ENCODE measurements at regions of chr11 and their contacts with region 1.

Region 1: DNA sequence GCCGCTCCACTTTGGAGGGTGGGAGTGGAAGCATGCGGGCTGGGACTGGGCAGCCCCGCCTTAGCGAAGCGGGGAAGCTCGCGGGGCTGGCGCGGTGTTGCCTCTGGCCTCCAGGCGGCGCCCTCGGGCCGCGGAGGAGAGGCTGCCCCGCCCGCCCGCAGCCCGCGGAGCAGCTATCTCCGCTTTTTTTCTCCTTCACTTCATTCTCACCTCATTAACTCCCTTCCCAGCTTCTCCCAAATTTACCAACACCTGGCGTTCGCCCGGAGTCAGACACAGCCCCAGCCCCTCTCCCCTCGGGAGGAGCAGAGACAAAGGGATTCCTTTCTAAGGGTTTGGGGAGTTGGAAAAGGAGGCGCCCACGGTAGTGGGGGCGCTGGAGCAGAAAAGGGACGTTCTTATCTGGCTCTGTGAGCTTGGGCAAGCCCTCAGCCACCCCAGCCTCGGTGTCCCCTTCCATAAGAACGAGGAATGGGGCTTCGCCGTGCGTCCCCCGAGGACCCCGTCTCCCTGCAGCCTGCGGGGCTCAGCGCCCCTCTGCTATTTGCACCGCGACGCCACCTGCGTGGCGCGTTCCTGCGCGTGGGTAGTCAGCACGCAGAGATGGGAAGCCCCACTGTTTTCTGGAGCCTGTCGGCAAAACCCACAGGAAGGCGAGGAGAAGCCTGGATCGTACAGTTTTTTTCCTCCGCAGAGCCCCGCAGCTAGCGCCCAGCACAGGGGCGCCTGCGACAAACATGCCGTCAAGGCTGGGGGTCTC is 1.5 kb upstream of the WNT11 start:
- DNase-seq: peak; percentile 71 to 88
- ATAC-seq: peak; percentile 70 to 89 (median 80)
- H3K4me3 ChIP-seq: peak overlapping the region; percentile 45 to 83 (median 70)
- H3K27ac ChIP-seq: peak overlapping the region in 8 of 10 donors; percentile 28 to 79 (median 63)
- H3K4me1 ChIP-seq: peaks cover 2 to 52% (median 40%) of the 10 kb centered on the region in 9 donors
- H3K27me3 ChIP-seq: peaks cover 0 to 90% (median 3%) of the 10 kb centered on the region in 7 donors
- CTCF ChIP-seq: peak; percentile 92 to 99 (median 97)

Region 2: GRCh38 chr11:76235233-76236091 is 27.6 kb after region 1 on chr11:
- intact Hi-C with region 1: loop called in 5 of 10 experiments (anchors 1 to 2 kb)
- DNase-seq: peak; percentile 84 to 93
- ATAC-seq: peak; percentile 85 to 95 (median 93)
- H3K4me3 ChIP-seq: peak overlapping the region; percentile 67 to 95 (median 86)
- H3K27ac ChIP-seq: peak overlapping the region; percentile 68 to 91 (median 84)
- H3K4me1 ChIP-seq: peaks cover 4 to 27% (median 12%) of the 10 kb centered on the region in 9 donors
- H3K27me3 ChIP-seq: no peaks in the 10 kb centered on the region
- CTCF ChIP-seq: no peak

Region 3: DNA sequence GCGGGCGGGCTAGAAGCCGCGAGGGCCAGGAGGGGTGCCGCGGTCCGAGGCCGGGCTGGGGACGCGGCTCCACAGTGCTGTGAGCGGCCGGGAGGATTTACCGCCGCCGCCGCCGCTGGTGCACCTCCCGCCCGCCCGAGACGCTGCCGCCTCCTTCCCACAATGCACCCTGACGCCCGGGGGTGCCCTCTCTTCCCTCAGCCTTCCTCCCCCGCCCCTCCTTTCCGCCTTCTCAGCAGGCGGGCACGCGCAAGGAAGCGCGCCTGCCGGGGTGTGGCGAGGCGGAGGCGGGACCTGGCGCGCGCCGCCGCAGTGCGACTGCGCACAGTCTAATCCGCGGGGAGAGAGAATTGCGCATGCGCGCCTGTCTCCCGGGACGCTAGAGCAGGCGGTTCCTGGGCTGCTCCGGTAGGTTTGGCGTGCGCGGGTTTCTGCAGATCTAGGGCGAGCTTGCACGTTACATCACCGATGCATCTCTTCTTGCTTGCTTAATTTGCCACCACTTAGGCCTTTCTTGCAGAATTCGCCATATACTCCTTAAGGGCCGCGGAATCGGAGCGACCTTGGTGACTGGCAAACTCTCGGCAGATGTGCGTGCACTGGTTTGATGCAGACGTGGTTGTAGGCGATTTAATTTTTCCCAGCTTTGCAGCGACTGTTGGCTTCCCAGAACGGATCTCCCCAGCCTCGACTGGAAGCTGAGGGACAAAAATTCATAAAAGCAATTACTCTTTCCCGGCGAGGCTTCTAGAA is 173.3 kb after region 1 on chr11 and contains the starts of genes GVQW3 and THAP12:
- intact Hi-C with region 1: loop called in 1 of 10 experiments (anchors 5 kb)
- DNase-seq: peak; percentile 98 to 99
- ATAC-seq: peak; percentile 97 to 99 (median 99)
- H3K4me3 ChIP-seq: peak within 1 kb of the TSS; percentile 67 to 99 (median 94)
- H3K27ac ChIP-seq: peak within 1 kb of the TSS; percentile 42 to 94 (median 91)
- H3K4me1 ChIP-seq: peaks cover 2 to 49% (median 36%) of the 10 kb centered on the region in 9 donors
- H3K27me3 ChIP-seq: no peaks in the 10 kb centered on the region
- CTCF ChIP-seq: peak in 4 of 9 donors; percentile 39 to 54 (median 46)
- total RNA-seq, gene GVQW3: 0.93 to 2.7 (median 1.8) TPM
- total RNA-seq, gene THAP12: 18.1 to 25.8 (median 22.4) TPM

Region 4: GRCh38 chr11:76512851-76513653 is 305.2 kb after region 1 on chr11:
- intact Hi-C with region 1: loop called in 3 of 10 experiments (anchors 5 to 10 kb)
- DNase-seq: no peak
- ATAC-seq: peak in 2 of 8 donors; percentile 52
- H3K4me3 ChIP-seq: no peak overlapping the region
- H3K27ac ChIP-seq: no peak overlapping the region
- H3K4me1 ChIP-seq: peaks cover 0 to 20% (median 10%) of the 10 kb centered on the region in 9 donors
- H3K27me3 ChIP-seq: no peaks in the 10 kb centered on the region
- CTCF ChIP-seq: peak in 7 of 9 donors; percentile 36 to 61 (median 57)

Region 5: DNA sequence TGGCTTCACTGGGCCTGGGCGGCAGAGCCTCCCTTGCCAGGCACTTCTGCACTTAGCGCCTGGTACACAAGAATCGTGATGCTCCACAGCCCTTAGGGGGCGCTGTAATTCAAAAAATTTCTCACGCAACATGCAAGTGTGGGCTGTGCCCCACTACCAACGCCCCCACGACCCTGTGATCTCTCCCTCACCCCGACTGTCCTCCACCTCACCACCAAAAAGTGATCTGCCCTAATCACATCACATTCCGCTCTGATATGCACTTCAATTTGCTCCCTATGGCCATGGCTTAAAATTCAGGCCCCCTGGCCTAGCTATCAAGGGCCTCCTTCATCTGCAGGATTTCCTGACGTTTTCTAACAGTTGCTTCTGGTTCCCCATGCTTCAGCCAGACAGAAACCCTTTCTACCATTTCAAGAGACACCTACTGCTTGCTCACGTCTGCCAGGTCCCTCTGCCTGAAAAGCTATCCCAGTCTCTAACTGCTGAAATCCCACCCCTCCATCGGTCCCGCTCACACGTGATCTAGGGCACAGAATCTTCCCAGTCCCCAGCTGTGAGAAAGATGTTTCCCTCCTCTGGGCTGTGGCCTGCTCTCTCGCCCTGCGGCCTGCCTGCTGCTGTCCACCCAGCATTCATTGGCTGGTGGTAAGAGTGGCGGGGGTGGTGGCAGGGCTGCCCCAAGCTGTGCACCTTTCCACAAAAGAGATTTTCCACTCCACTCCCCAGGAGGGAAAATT is 490.7 kb after region 1 on chr11:
- intact Hi-C with region 1: loop called in 1 of 10 experiments (anchors 10 kb)
- DNase-seq: no peak
- ATAC-seq: no peak
- H3K4me3 ChIP-seq: no peak overlapping the region
- H3K27ac ChIP-seq: no peak overlapping the region
- H3K4me1 ChIP-seq: peaks cover 0 to 18% (median 0%) of the 10 kb centered on the region in 9 donors
- H3K27me3 ChIP-seq: no peaks in the 10 kb centered on the region
- CTCF ChIP-seq: peak in 1 of 9 donors; percentile 26

Measured in heart right ventricle (tissue), 16 donors.